ENCODE measurements at regions of chr18 and their contacts with region 1.

Region 1: GRCh38 chr18:13216092-13216582 is 2.4 kb upstream of the LDLRAD4 start:
- DNase-seq: peak; percentile 54 to 73 (median 69)
- ATAC-seq: peak; percentile 76 to 88 (median 82)
- H3K4me3 ChIP-seq: no peak overlapping the region
- H3K27ac ChIP-seq: no peak overlapping the region
- H3K4me1 ChIP-seq: peaks cover 0 to 3% (median 0%) of the 10 kb centered on the region in 3 donors
- H3K27me3 ChIP-seq: peaks cover 0 to 5% (median 0%) of the 10 kb centered on the region in 4 donors
- CTCF ChIP-seq: peak in 2 of 4 donors; percentile 34 to 39

Region 2: GRCh38 chr18:13525381-13526029 is 309.4 kb after region 1 on chr18:
- intact Hi-C with region 1: loop called in 1 of 3 experiments (anchors 5 kb)
- DNase-seq: peak in 1 of 6 donors; percentile 7
- ATAC-seq: no peak
- H3K4me3 ChIP-seq: no peak overlapping the region
- H3K27ac ChIP-seq: no peak overlapping the region
- H3K4me1 ChIP-seq: no peaks in the 10 kb centered on the region
- H3K27me3 ChIP-seq: no peaks in the 10 kb centered on the region
- CTCF ChIP-seq: no peak

Region 3: DNA sequence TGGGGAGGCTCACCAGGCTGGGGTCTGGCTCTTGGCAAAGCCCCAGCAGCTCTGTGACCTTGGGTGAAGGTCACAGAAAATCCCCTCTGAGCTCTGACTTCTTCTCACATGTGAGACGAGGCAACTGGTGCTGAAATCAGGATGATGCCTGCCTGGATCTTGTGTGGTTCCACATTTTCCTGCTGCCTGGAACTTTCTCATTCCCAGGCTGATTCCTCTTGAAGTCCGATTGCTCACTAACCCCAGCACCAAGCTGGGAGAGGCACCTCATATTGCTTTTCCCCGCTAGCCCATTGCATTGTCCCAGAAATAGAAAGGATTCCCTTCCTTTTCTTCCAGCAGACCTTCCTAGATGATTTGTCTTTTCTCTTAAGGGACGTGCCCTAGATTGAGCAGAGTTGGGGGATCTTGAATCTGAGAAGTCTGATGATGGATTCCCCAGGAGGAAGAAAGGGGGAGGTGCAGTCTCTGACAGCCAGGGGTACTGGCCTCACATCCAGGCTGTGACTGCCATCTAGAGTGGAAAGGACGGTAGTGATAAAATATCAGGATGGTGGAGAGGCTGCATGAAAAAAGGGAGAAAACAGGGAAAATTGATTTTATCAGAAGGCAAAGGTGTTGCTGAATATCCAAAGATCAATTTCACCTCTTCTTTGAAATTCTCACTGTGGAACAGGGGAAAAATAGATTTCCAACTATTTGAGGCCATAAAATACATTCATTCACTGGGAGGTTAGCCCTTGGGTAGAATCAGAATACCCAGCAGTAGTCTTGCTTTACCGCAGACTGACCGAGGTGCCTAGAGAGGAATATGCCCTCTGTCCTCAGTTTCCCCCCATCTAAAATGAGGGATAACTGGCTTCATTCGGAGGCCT is 413.9 kb after region 1 on chr18:
- intact Hi-C with region 1: loop called in 1 of 3 experiments (anchors 10 kb)
- DNase-seq: peak in 1 of 6 donors; percentile 25
- ATAC-seq: peak; percentile 71 to 92 (median 88)
- H3K4me3 ChIP-seq: no peak overlapping the region
- H3K27ac ChIP-seq: no peak overlapping the region
- H3K4me1 ChIP-seq: no peaks in the 10 kb centered on the region
- H3K27me3 ChIP-seq: no peaks in the 10 kb centered on the region
- CTCF ChIP-seq: peak in 3 of 4 donors; percentile 28 to 51 (median 39)

Measured in pancreas (tissue), 10 donors.